ENCODE measurements at regions of chr5 and their contacts with region 1.

Region 1: DNA sequence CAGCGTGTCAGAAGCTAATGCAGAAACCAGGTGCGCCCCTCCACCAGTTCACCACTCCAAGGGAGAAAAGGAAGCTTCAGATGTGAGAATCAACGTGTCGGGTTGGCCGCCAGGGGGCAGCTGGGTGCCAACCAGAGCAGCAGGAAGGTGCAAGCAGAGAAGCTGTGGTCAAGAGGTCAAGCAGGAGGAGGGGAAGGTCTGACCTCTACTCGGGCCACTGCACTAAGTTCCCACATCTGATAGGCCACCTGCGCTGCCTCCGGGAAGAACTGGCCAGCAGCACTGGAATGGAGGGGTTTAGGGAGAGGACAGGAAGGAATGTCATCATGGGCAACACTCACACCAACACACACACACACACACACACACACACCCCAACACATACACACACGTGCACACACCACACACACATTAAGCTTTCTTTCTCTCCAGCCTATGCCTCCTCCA is 31.4 kb downstream of the ANXA6 start:
- DNase-seq: peak; percentile 61 to 86
- ATAC-seq: peak; percentile 34 to 52
- H3K4me3 ChIP-seq: no peak overlapping the region
- H3K27ac ChIP-seq: peak overlapping the region; percentile 82 to 91 (median 88)
- H3K4me1 ChIP-seq: peaks cover 30 to 48% of the 10 kb centered on the region in 2 donors
- H3K27me3 ChIP-seq: no peaks in the 10 kb centered on the region
- CTCF ChIP-seq: peak; percentile 89 to 96 (median 91)
- POLR2A ChIP-seq: no peak

Region 2: GRCh38 chr5:151107738-151108508 is 18.3 kb before region 1 on chr5:
- in situ Hi-C with region 1: no loop called
- intact Hi-C with region 1: no loop called
- DNase-seq: peak in 1 of 2 donors; percentile 55
- ATAC-seq: peak in 1 of 2 donors; percentile 55
- H3K4me3 ChIP-seq: no peak overlapping the region
- H3K27ac ChIP-seq: peak overlapping the region; percentile 58 to 88 (median 79)
- H3K4me1 ChIP-seq: peaks cover 39 to 45% of the 10 kb centered on the region in 2 donors
- H3K27me3 ChIP-seq: no peaks in the 10 kb centered on the region
- CTCF ChIP-seq: no peak
- POLR2A ChIP-seq: no peak

Region 3: GRCh38 chr5:151141535-151141934 is 15.3 kb after region 1 on chr5:
- in situ Hi-C with region 1: no loop called
- intact Hi-C with region 1: loop called (anchors 2 kb)
- DNase-seq: peak; percentile 73 to 89
- ATAC-seq: peak; percentile 94
- H3K4me3 ChIP-seq: peak overlapping the region in 2 of 4 donors; percentile 9 to 26
- H3K27ac ChIP-seq: peak overlapping the region; percentile 73 to 84 (median 79)
- H3K4me1 ChIP-seq: peaks cover 50 to 63% of the 10 kb centered on the region in 2 donors
- H3K27me3 ChIP-seq: no peaks in the 10 kb centered on the region
- CTCF ChIP-seq: no peak
- POLR2A ChIP-seq: peak; percentile 49 to 54

Region 4: GRCh38 chr5:151164686-151165392 is 38.6 kb after region 1 on chr5:
- in situ Hi-C with region 1: loop called in 3 of 4 experiments (anchors 5 kb)
- intact Hi-C with region 1: loop called (anchors 1 kb)
- DNase-seq: peak; percentile 65 to 83
- ATAC-seq: peak; percentile 91 to 94
- H3K4me3 ChIP-seq: no peak overlapping the region
- H3K27ac ChIP-seq: peak overlapping the region in 3 of 4 donors; percentile 29 to 41 (median 34)
- H3K4me1 ChIP-seq: peaks cover 12 to 21% of the 10 kb centered on the region in 2 donors
- H3K27me3 ChIP-seq: no peaks in the 10 kb centered on the region
- CTCF ChIP-seq: peak; percentile 79 to 92 (median 91)
- POLR2A ChIP-seq: no peak

Measured in gastrocnemius medialis (tissue), 4 donors.